Posterior vena cava (tissue), 2 donors: ENCODE measurements at regions of chr6 and their contacts with region 1.

Region 1: GRCh38 chr6:96716221-96716620 is 121.1 kb downstream of the GPR63 start:
- DNase-seq: no peak

Region 2: GRCh38 chr6:96836631-96837080 is 120.4 kb after region 1 on chr6:
- intact Hi-C with region 1: loop called in 1 of 2 experiments (anchors 2 kb)
- DNase-seq: no peak

Region 3: GRCh38 chr6:97805596-97805995 is 1089.4 kb after region 1 on chr6:
- intact Hi-C with region 1: no loop called
- DNase-seq: no peak